AG04450 (cell line): ENCODE measurements at regions of chr1 and their contacts with region 1.

Region 1: DNA sequence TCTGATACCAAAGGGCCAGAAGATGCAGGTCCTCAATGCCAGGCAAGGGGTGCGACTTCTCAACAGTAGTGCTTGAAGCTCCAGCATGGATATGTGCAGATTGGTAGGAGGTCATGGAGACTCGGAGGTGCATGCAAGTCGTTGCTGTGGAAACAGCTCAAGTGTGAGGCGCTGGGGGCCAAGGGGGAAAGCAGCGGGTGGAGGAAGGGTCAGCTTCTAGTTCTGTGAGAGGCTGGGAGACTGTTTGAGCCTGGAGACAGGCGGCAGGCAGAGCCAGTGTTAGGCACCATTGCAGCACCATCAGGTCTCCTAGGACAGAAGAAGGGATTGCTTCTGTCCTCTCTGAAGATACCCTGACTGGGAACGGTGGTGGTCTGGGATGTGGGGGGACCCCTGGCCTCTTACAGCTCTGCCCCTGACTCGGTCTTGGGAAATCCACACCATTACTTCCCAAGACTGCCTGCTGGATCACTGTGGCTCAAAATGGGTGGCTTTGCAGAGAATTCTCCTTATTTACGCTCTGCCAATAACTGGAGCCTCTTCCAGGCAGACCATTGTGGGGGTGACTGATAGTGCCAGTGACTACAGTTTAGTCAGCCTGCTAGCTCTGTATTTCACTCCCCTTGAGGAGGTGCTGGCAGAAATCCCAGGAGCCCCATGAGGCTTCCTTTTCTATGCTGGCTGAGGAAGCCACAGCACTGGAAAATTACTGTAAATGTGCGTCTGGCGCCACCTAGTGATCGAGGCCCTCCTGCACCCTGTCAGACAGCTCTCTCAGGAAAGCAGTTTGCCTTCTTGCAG is 46.3 kb upstream of the VANGL1 start:
- DNase-seq: peak; percentile 90
- H3K4me3 ChIP-seq: no peak overlapping the region
- H3K27ac ChIP-seq: no peak overlapping the region
- H3K27me3 ChIP-seq: peaks cover 2% of the 10 kb centered on the region
- CTCF ChIP-seq: peak; percentile 98

Region 2: GRCh38 chr1:115118611-115119010 is 476.9 kb before region 1 on chr1:
- CTCF ChIA-PET with region 1: interaction called, 21 read pairs
- POLR2A ChIA-PET with region 1: no interaction called
- DNase-seq: no peak
- H3K4me3 ChIP-seq: no peak overlapping the region
- H3K27ac ChIP-seq: no peak overlapping the region
- H3K27me3 ChIP-seq: no peaks in the 10 kb centered on the region
- CTCF ChIP-seq: no peak

Region 3: DNA sequence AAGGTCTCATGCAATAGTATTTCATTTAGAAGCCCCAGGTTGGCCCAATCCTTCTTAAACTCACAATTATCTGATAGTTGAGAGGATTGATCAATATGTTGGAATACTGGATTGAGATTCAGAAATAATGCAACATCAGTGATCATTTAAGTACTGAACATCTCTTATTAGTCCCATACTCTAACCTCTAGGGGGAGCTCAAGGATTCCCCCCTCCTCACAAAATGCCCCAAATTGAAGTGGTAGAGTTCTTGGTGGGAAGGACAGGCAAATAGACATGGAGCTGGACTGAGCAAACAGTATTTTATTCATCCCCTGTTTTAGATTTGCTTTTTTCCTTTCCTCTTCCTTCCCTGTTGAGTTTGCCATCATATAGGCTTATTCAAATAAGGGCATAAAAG is 320.3 kb before region 1 on chr1:
- CTCF ChIA-PET with region 1: interaction called, 10 read pairs
- POLR2A ChIA-PET with region 1: no interaction called
- DNase-seq: no peak
- H3K4me3 ChIP-seq: no peak overlapping the region
- H3K27ac ChIP-seq: no peak overlapping the region
- H3K27me3 ChIP-seq: no peaks in the 10 kb centered on the region
- CTCF ChIP-seq: peak; percentile 52

Region 4: GRCh38 chr1:115356356-115356755 is 239.1 kb before region 1 on chr1:
- CTCF ChIA-PET with region 1: no interaction called
- POLR2A ChIA-PET with region 1: no interaction called
- DNase-seq: no peak
- H3K4me3 ChIP-seq: no peak overlapping the region
- H3K27ac ChIP-seq: no peak overlapping the region
- H3K27me3 ChIP-seq: no peaks in the 10 kb centered on the region
- CTCF ChIP-seq: no peak

Region 5: DNA sequence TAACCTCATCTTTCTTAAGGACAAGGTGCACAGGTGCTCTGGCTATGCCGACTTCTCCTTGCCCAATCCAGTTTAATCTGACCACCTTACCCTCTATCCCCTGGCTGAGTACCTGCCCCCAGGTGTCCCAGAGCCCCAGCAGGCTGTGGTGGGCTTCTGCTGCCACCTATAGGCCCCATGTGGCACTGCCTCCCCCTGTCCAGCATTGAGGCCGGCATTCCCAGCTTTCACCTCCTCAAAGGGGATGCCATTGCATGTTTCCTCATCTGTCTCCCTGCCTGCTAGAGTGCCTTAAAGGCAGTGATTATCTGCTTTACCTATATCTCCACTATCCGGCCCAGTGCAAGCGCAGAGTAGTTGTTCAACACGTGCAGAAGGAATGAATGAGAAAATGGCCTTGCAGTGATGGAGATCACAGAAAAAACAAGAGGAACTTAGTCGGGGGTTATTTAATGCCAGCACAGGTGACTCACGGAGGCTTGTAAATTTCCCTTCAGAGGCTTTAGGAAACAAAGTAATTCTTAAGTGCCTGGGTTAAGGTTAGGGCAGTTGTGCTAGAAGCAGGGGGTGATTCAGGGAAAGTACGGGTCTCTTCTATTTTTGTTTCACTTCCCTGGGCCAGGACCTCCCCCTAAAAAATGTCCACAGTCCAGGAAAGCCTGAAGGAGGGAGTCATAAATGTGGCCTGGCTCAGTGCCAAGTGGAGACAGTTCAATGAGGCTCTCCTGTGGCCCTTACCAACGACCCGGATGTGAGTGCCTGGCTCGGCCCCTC is 125.6 kb before region 1 on chr1:
- CTCF ChIA-PET with region 1: interaction called, 39 read pairs
- POLR2A ChIA-PET with region 1: no interaction called
- DNase-seq: no peak
- H3K4me3 ChIP-seq: no peak overlapping the region
- H3K27ac ChIP-seq: no peak overlapping the region
- H3K27me3 ChIP-seq: no peaks in the 10 kb centered on the region
- CTCF ChIP-seq: peak; percentile 98

Region 6: DNA sequence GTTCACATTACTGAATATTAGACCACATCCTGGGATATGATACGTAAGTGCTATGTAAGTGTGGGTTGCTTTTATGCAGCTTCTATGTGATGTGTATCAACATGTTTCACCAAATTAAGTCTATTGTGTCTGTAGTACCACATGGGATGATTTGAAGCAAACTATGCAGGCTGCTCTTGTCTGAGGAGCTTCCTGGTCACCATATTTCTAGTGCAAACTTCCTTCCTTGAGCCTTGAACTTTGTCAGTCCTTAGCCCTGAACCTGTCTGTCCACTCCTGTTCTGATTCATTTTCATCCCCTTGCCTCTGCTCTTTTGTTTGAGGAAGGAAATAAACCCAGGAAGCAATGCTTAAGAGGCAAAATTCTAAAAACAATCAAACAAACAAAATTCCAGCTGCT is 71.2 kb before region 1 on chr1:
- CTCF ChIA-PET with region 1: interaction called, 12 read pairs
- POLR2A ChIA-PET with region 1: interaction called, 3 read pairs
- DNase-seq: no peak
- H3K4me3 ChIP-seq: no peak overlapping the region
- H3K27ac ChIP-seq: no peak overlapping the region
- H3K27me3 ChIP-seq: no peaks in the 10 kb centered on the region
- CTCF ChIP-seq: no peak

Region 7: GRCh38 chr1:115609021-115609420 is 13.5 kb after region 1 on chr1:
- CTCF ChIA-PET with region 1: interaction called, 12 read pairs
- POLR2A ChIA-PET with region 1: interaction called, 5 read pairs
- DNase-seq: no peak
- H3K4me3 ChIP-seq: no peak overlapping the region
- H3K27ac ChIP-seq: no peak overlapping the region
- H3K27me3 ChIP-seq: peaks cover 16% of the 10 kb centered on the region
- CTCF ChIP-seq: no peak

Region 8: GRCh38 chr1:115771847-115772457 is 176.5 kb after region 1 on chr1:
- CTCF ChIA-PET with region 1: interaction called, 13 read pairs
- POLR2A ChIA-PET with region 1: no interaction called
- DNase-seq: peak; percentile 54
- H3K4me3 ChIP-seq: no peak overlapping the region
- H3K27ac ChIP-seq: no peak overlapping the region
- H3K27me3 ChIP-seq: peaks cover 10% of the 10 kb centered on the region
- CTCF ChIP-seq: peak; percentile 84